GM10248 (cell line): ENCODE measurements at regions of chr14 and their contacts with region 1.

Region 1: GRCh38 chr14:50778721-50779483 is 52.1 kb downstream of the NIN start:
- DNase-seq: no peak
- CTCF ChIP-seq: no peak

Region 2: GRCh38 chr14:50677527-50678063 is 101.3 kb before region 1 on chr14:
- CTCF ChIA-PET with region 1: interaction called, 12 read pairs
- POLR2A ChIA-PET with region 1: no interaction called
- DNase-seq: peak; percentile 29
- CTCF ChIP-seq: no peak

Region 3: DNA sequence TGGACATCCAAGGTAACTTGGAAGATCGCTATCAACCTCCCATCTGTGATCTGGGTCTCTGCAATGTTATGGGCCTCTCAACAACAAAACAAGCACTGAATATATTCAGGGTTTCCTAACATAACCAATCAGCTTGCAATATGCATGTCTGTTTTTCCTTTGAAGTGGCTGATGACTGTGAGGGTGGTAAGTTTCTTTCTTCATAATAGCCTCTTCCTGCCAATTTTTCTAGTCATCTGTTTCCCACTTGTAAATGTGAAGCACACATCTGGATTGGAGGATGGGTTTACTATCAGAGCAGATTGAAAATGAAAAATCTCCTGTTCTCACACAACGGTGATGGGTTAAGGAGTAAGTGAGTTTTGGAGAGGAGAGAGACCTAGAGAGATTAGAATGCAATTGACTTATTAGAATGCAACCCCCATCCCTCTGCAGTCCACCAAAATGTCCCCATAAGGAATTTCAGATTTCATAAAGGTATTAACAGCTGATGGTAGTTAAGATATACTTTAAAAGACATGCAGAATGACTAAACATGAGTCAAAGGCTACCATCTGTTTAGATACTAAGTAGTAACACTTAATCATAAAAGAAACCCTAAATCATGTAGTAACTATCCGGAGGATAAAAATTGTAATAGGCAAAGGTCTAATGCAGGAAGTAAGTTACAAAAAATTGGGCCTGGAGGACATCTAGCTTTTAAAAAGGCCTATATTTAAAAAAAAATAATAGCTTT is 52.4 kb before region 1 on chr14:
- CTCF ChIA-PET with region 1: interaction called, 11 read pairs
- POLR2A ChIA-PET with region 1: no interaction called
- DNase-seq: peak; percentile 20
- CTCF ChIP-seq: no peak

Region 4: GRCh38 chr14:50823051-50823761 is 44.3 kb after region 1 on chr14:
- CTCF ChIA-PET with region 1: interaction called, 20 read pairs
- POLR2A ChIA-PET with region 1: no interaction called
- DNase-seq: no peak
- CTCF ChIP-seq: no peak

Region 5: GRCh38 chr14:50830932-50831725 is 52.2 kb after region 1 on chr14 and contains the start of gene NIN:
- CTCF ChIA-PET with region 1: interaction called, 20 read pairs
- POLR2A ChIA-PET with region 1: no interaction called
- DNase-seq: peak; percentile 89
- CTCF ChIP-seq: no peak

Region 6: GRCh38 chr14:50901361-50901760 is 122.5 kb after region 1 on chr14:
- CTCF ChIA-PET with region 1: no interaction called
- POLR2A ChIA-PET with region 1: no interaction called
- DNase-seq: peak; percentile 19
- CTCF ChIP-seq: no peak

Region 7: GRCh38 chr14:51277753-51278415 is 499.0 kb after region 1 on chr14:
- CTCF ChIA-PET with region 1: no interaction called
- POLR2A ChIA-PET with region 1: no interaction called
- DNase-seq: no peak
- CTCF ChIP-seq: no peak